Caco-2 (cell line): ENCODE measurements at regions of chr13 and their contacts with region 1.

Region 1: GRCh38 chr13:92896842-92897241 is 329.8 kb upstream of the GPC6 start:
- DNase-seq: peak in 1 of 2 experiments; percentile 22
- H3K4me3 ChIP-seq: no peak overlapping the region
- H3K4me3 Mint-ChIP-seq: no peak overlapping the region
- H3K27ac Mint-ChIP-seq: no peak overlapping the region
- H3K4me1 ChIP-seq: no peaks in the 10 kb centered on the region
- H3K4me1 Mint-ChIP-seq: no peaks in the 10 kb centered on the region
- H3K27me3 ChIP-seq: no peaks in the 10 kb centered on the region
- H3K27me3 Mint-ChIP-seq: peaks cover 3% of the 10 kb centered on the region
- CTCF ChIP-seq: peak; percentile 32 to 49

Region 2: DNA sequence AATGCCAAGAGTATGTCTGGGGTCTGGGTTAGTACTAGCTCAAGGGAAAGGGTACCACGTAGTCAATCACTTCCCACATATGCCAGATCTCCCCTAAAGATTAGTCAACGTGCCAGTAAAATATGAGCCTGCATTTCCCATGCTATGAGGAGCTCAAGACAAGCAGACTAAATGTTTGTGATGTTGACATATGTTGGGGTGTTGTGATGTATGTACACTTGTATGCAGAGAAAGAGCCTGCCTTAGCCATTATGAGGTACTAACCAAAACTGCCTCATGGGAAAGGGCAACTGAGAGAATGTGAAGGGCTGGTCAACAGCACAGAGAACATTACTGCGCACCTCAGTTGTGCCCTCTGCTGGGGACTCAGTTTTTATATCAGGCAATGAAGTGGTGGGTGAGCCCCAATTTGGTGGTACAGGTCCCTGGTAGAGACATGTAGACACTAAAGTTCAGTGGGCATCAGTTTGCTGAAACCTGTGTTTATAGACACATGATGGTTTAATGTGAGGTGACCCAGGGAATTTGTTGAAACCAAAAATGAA is 1295.7 kb after region 1 on chr13:
- CTCF ChIA-PET with region 1: no interaction called
- POLR2A ChIA-PET with region 1: no interaction called
- intact Hi-C with region 1: loop called (anchors 10 kb)
- DNase-seq: peak; percentile 40 to 42
- H3K4me3 ChIP-seq: no peak overlapping the region
- H3K4me3 Mint-ChIP-seq: no peak overlapping the region
- H3K27ac Mint-ChIP-seq: no peak overlapping the region
- H3K4me1 ChIP-seq: no peaks in the 10 kb centered on the region
- H3K4me1 Mint-ChIP-seq: no peaks in the 10 kb centered on the region
- H3K27me3 ChIP-seq: no peaks in the 10 kb centered on the region
- H3K27me3 Mint-ChIP-seq: peaks cover 3% of the 10 kb centered on the region
- CTCF ChIP-seq: peak; percentile 42 to 47